Heart right ventricle (tissue), 16 donors: ENCODE measurements at regions of chr18 and their contacts with region 1.

Region 1: GRCh38 chr18:38427232-38427631 is 861.6 kb upstream of the CELF4 start:
- DNase-seq: no peak
- ATAC-seq: no peak
- H3K4me3 ChIP-seq: no peak overlapping the region
- H3K27ac ChIP-seq: no peak overlapping the region
- H3K4me1 ChIP-seq: no peaks in the 10 kb centered on the region
- H3K27me3 ChIP-seq: no peaks in the 10 kb centered on the region
- CTCF ChIP-seq: no peak

Region 2: DNA sequence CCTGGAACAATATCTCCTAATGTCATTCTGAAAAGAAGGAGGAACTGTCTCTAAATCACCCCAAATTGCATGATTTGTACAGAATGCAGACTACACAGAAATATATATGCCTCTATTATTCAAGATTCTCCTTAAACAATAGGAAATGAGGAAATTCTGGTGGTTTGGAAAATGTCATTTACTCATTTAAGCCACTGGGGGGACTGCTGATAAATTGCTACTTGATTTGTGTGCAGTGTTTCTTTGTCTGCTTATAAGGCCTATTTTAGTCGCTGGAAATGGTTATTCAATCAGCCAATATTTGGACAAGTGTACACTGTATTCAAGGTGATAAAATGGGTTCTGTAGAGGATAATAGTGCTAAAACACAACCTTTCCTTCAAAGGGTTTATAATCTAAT is 59.8 kb before region 1 on chr18:
- intact Hi-C with region 1: loop called in 1 of 10 experiments (anchors 10 kb)
- DNase-seq: no peak
- ATAC-seq: no peak
- H3K4me3 ChIP-seq: no peak overlapping the region
- H3K27ac ChIP-seq: no peak overlapping the region
- H3K4me1 ChIP-seq: no peaks in the 10 kb centered on the region
- H3K27me3 ChIP-seq: peaks cover 0 to 3% (median 0%) of the 10 kb centered on the region in 7 donors
- CTCF ChIP-seq: peak in 1 of 9 donors; percentile 11

Region 3: DNA sequence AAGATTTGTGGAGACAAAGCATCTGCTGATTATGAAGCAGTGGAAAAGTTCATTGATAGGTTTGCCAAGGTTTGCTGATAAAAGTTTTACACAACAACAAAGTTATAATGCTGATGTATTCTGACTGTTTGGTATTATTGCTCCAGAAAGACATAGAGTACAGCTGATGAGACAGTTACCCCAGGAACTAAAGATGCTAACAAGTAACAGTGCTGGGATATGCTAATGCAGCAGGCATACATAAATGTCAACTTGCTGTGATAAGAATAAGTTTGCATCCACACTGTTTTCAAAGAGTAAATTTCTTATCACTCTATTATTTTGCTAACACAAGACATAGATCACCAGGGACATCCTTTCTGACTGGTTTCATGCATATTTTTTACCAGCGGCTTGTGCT is 359.7 kb after region 1 on chr18:
- intact Hi-C with region 1: no loop called
- DNase-seq: no peak
- ATAC-seq: no peak
- H3K4me3 ChIP-seq: no peak overlapping the region
- H3K27ac ChIP-seq: no peak overlapping the region
- H3K4me1 ChIP-seq: no peaks in the 10 kb centered on the region
- H3K27me3 ChIP-seq: no peaks in the 10 kb centered on the region
- CTCF ChIP-seq: no peak